ENCODE measurements at regions of chr5 and their contacts with region 1.

Region 1: DNA sequence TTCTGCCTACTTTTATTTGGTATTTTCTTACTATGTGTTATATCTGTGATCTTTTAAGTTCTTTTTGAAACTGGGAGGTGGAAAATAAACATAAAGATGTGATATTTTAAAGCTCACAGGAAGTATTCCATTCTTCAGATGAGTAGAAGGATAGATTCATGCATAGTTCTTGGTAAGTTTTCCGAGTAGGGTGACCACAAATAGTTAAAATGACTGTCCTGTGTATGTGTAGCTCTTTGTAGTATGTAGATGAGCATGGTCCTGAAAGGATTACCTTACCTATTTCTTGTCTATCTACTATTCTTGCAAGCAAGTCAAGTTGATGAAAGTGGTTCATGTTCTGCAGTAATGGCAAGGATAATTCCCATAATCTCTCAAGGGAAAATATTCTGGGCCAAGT is 47.7 kb downstream of the SRFBP1 start:
- DNase-seq: no peak
- H3K4me3 Mint-ChIP-seq: no peak overlapping the region
- H3K27ac Mint-ChIP-seq: peak overlapping the region; percentile 38
- H3K4me1 Mint-ChIP-seq: peaks cover 18% of the 10 kb centered on the region
- H3K27me3 Mint-ChIP-seq: no peaks in the 10 kb centered on the region

Region 2: DNA sequence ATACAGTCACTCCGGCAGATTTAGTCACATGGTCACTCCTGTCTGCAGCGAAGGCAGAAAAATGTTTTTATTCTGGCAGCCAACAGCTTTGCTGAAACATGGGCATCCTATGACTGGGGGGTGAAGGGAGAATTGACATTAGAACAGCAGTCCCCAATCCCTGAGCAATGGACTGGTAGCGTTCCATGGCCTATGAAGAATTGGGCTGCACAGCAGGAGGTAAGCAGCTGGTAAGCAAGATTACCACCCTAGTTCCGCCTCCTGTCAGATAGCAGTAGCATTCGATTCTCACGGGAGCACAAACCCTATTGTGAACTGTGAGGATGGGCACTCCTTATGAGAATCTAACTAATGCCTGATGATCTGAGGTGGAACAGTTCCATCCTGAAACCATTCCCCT is 250.8 kb before region 1 on chr5:
- intact Hi-C with region 1: no loop called
- DNase-seq: no peak
- H3K4me3 Mint-ChIP-seq: no peak overlapping the region
- H3K27ac Mint-ChIP-seq: no peak overlapping the region
- H3K4me1 Mint-ChIP-seq: no peaks in the 10 kb centered on the region
- H3K27me3 Mint-ChIP-seq: no peaks in the 10 kb centered on the region

Region 3: GRCh38 chr5:122019919-122020590 is 10.6 kb after region 1 on chr5:
- intact Hi-C with region 1: loop called (anchors 1 kb)
- DNase-seq: no peak
- H3K4me3 Mint-ChIP-seq: peak overlapping the region; percentile 57
- H3K27ac Mint-ChIP-seq: peak overlapping the region; percentile 80
- H3K4me1 Mint-ChIP-seq: peaks cover 7% of the 10 kb centered on the region
- H3K27me3 Mint-ChIP-seq: no peaks in the 10 kb centered on the region

Region 4: GRCh38 chr5:122599000-122599399 is 589.6 kb after region 1 on chr5:
- intact Hi-C with region 1: no loop called
- DNase-seq: no peak
- H3K4me3 Mint-ChIP-seq: no peak overlapping the region
- H3K27ac Mint-ChIP-seq: no peak overlapping the region
- H3K4me1 Mint-ChIP-seq: no peaks in the 10 kb centered on the region
- H3K27me3 Mint-ChIP-seq: no peaks in the 10 kb centered on the region

Measured in activated CD4-positive, alpha-beta T cell treated with anti-CD3 and anti-CD28 coated beads, Interleukin-2, amount 10 ng/mL, durations not matched to agents 24 days and 14 days (primary cell).